Body of pancreas (tissue), 4 donors: ENCODE measurements at regions of chr10 and their contacts with region 1.

Region 1: DNA sequence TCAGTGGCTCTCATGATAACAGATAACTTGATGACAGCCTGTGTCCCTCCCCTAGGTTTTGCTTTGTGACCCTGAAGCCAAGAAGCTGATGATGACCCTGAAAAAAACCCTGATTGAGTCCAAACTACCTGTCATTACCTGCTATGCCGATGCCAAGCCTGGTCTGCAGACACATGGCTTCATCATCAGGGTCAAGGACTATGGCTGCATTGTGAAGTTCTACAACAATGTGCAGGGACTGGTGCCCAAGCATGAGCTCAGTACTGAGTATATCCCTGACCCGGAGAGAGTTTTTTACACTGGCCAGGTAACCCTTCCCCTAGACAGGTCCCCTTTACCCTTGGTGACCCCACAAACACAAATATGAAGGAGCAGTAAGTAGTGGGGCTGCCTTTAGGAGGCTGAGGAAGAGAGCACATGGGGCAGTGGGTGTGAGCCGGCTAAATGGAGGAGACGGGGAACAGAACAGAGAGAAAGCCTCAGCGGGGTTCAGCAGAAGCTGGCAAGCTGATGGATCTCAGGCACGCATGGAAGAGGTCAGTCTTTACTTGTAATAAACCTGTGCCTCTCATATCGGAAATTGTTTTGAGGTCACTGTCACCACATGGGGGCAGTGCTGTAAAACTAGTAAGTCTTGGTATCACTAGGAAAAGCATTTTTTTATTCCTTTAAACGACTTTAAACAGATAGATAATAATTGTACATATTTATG is 20.2 kb downstream of the PDCD11 start:
- DNase-seq: peak; percentile 66 to 82 (median 76)
- ATAC-seq: peak; percentile 59
- H3K4me3 ChIP-seq: no peak overlapping the region
- H3K27ac ChIP-seq: no peak overlapping the region
- H3K4me1 ChIP-seq: no peaks in the 10 kb centered on the region
- H3K27me3 ChIP-seq: no peaks in the 10 kb centered on the region
- CTCF ChIP-seq: peak; percentile 33 to 67 (median 62)
- POLR2A ChIP-seq: no peak

Region 2: GRCh38 chr10:102998005-102998404 is 418.6 kb before region 1 on chr10:
- intact Hi-C with region 1: no loop called
- DNase-seq: no peak
- ATAC-seq: no peak
- H3K4me3 ChIP-seq: no peak overlapping the region
- H3K27ac ChIP-seq: no peak overlapping the region
- H3K4me1 ChIP-seq: no peaks in the 10 kb centered on the region
- H3K27me3 ChIP-seq: no peaks in the 10 kb centered on the region
- CTCF ChIP-seq: no peak
- POLR2A ChIP-seq: no peak

Region 3: DNA sequence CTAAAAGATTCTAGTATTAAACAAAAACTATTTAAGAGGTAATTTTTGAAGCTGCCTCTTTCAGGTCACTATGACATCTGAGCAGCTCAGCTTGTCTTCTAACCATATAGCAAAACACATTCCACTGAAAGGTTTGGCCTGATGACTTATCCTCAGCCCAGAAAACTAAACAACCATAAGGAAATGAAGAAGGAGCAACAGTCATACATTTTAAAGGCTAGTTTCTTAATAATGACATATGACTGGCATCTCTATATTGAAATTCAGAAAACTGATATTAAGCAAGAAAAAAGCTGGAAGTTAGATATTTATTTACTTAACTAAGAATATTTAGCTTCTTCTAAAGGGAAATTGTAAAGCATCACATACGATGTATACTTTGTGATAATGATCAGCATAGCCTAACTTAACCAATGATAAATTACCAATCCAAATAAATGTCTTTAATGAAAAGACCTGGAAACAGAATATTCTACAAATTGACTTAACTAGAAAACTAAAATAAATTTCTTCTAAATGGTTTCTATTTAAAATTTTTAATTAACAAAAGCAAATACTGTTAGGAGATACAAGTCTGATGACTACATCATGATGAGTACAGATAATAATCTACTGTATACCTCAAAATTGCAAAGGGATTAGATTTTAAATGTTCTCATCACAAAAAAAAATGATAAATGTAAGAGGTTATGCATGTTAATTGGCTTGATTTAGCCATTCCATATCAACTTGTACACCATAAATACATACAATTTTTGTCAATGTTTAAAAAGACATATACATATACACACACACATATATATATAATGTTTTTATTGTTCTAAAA is 247.9 kb before region 1 on chr10:
- intact Hi-C with region 1: no loop called
- DNase-seq: no peak
- ATAC-seq: no peak
- H3K4me3 ChIP-seq: no peak overlapping the region
- H3K27ac ChIP-seq: no peak overlapping the region
- H3K4me1 ChIP-seq: no peaks in the 10 kb centered on the region
- H3K27me3 ChIP-seq: no peaks in the 10 kb centered on the region
- CTCF ChIP-seq: no peak
- POLR2A ChIP-seq: no peak

Region 4: DNA sequence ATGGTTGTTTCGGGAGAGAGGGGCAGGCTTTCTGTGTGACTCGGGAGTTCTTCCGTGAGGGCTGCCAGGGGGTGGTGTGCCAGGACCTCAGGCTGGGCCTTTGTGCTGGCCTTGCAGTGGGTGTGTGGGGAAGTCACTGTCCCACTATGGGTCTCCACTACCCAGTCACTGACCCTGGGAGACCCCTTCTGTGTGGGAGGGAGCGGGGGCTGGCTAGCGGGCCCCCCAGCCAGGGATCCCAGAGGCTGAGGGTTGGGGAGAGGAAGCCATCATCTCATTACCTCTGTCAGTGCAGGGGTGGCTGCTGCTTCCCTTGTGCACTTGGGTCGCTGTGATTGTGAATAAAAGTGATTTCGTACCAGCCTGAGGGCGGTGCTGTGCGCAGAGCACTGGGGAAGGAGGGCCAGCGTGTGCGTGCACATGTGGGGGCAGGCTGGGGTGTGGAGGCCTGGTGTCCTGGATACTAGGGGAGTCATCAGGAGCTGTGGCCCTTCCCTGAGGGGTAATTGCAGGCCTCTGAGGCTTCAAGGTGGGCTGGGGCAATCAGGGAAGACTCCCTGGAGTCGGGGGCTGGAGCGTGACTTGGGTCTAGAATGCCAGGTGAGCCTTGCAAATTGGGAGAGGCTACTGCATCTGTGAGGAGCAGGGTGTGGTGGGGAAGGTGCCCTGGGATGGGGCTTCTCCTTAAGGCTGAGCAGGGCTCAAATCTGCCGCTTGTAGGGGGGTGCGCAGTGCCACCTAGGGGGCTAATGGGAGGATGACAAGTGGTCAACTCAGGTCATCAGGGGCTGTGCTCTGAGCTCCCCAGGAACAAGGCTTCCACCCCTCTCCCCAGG is 175.8 kb after region 1 on chr10:
- intact Hi-C with region 1: loop called (anchors 10 kb)
- DNase-seq: peak; percentile 49 to 73 (median 65)
- ATAC-seq: peak; percentile 75
- H3K4me3 ChIP-seq: no peak overlapping the region
- H3K27ac ChIP-seq: no peak overlapping the region
- H3K4me1 ChIP-seq: no peaks in the 10 kb centered on the region
- H3K27me3 ChIP-seq: no peaks in the 10 kb centered on the region
- CTCF ChIP-seq: peak; percentile 57 to 73 (median 64)
- POLR2A ChIP-seq: no peak